Dorsolateral prefrontal cortex (tissue), 120 donors: ENCODE measurements at regions of chr9 and their contacts with region 1.

Region 1: DNA sequence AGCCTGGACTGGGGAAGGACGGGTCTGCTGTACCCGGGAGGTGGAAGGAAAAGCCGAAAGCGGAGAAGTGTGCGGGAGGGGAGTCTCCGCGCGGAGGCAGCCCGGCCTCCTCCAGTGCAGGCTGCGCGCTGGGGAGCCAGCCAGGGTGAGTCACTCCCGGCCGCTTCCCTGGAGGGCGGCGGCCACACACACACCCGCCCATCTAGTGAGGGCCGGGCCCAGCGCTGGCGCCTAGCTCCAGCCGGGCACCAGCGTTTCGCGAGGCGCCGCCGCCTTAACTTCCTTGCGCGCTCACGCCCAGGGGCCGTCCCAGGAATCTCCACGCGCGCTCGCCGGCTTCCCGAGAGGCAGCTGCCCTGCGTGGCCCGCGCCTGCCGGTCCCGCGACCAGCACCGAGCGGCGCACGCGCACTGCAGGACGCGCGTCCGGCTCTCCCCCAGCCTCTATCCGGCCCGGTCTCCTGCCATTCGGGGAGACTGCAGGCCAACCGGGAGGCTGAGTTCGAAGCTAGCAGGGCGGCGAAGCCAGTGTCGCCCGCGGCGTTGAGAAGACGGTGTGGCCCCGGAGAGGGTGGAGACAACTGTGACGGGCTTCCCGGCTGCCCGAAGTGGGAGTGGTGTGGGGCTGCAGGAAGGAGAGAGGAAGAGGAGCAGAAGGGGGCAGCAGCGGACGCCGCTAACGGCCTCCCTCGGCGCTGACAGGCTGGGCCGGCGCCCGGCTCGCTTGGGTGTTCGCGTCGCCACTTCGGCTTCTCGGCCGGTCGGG is at the start of gene JAK2:
- DNase-seq: peak; percentile 72 to 92 (median 86)
- H3K4me3 ChIP-seq: peak within 1 kb of the TSS; percentile 44 to 99 (median 90)
- H3K27ac ChIP-seq: peak within 1 kb of the TSS; percentile 84 to 99 (median 97)
- H3K27me3 ChIP-seq: no peaks in the 10 kb centered on the region
- CTCF ChIP-seq: peak in 53 of 56 donors; percentile 12 to 68 (median 46)
- total RNA-seq, gene JAK2: 15.3 to 35.5 (median 24.7) TPM

Region 2: GRCh38 chr9:4604678-4605095 is 380.1 kb before region 1 on chr9:
- intact Hi-C with region 1: loop called in 1 of 2 experiments (anchors 10 kb)
- DNase-seq: peak in 3 of 10 donors; percentile 38 to 74 (median 68)
- H3K4me3 ChIP-seq: no peak overlapping the region
- H3K27ac ChIP-seq: no peak overlapping the region
- H3K27me3 ChIP-seq: no peaks in the 10 kb centered on the region
- CTCF ChIP-seq: peak; percentile 50 to 84 (median 72)

Region 3: GRCh38 chr9:4679268-4680172 is 305.3 kb before region 1 on chr9 and contains the start of gene CDC37L1:
- intact Hi-C with region 1: loop called in 1 of 2 experiments (anchors 10 kb)
- DNase-seq: peak; percentile 94 to 99 (median 98)
- H3K4me3 ChIP-seq: peak within 1 kb of the TSS; percentile 63 to 99 (median 92)
- H3K27ac ChIP-seq: peak within 1 kb of the TSS; percentile 88 to 100 (median 97)
- H3K27me3 ChIP-seq: no peaks in the 10 kb centered on the region
- CTCF ChIP-seq: peak; percentile 8 to 81 (median 66)
- total RNA-seq, gene CDC37L1: 14.4 to 43.2 (median 28.4) TPM

Region 4: GRCh38 chr9:4762108-4762885 is 222.5 kb before region 1 on chr9:
- intact Hi-C with region 1: loop called (anchors 2 to 5 kb)
- DNase-seq: peak; percentile 50 to 85 (median 72)
- H3K4me3 ChIP-seq: peak overlapping the region in 36 of 59 donors; percentile 0 to 50 (median 22)
- H3K27ac ChIP-seq: peak overlapping the region in 5 of 59 donors; percentile 11 to 65 (median 35)
- H3K27me3 ChIP-seq: no peaks in the 10 kb centered on the region
- CTCF ChIP-seq: peak; percentile 70 to 99 (median 88)

Region 5: GRCh38 chr9:4855841-4856240 is 129.0 kb before region 1 on chr9:
- intact Hi-C with region 1: loop called in 1 of 2 experiments (anchors 10 kb)
- DNase-seq: peak in 8 of 10 donors; percentile 36 to 80 (median 66)
- H3K4me3 ChIP-seq: no peak overlapping the region
- H3K27ac ChIP-seq: peak overlapping the region in 45 of 59 donors; percentile 3 to 84 (median 65)
- H3K27me3 ChIP-seq: no peaks in the 10 kb centered on the region
- CTCF ChIP-seq: no peak

Region 6: DNA sequence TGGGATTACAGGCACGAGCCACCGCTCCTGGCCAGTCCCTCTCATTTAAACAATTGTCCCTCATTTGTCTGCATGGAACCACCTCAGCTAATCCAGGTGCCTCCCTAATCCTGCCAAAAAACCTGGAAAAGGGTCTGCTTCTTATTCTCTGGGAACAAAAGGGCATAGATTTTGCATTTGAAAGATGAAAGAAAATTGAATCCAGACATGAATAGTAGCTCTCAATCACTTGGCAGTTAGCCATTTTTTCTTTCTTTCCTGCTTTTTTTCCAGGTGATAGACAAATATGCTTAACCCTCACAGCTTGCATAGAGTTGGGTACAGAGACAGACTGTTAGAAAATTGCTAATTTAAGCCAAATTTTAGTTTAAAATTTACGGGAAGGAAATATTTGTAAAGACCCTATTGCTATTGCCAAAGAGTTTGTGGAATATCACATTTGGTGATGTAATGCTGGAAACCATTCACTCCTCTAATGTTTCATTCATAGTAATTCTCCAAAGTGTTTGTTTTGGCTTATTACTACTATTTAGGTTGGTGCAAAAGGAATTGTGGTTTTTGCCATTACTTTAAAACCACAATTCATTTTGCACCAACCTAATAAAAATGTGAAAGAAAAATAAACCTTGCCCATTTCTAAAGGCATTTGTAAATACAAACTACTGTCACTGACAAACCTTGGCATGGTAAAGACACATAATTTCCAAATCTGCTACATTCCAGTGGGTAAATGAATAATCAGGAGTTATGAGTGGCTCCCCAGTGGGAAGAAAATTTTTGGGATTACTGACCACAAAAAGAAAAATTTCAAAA is 80.3 kb before region 1 on chr9:
- intact Hi-C with region 1: no loop called
- DNase-seq: no peak
- H3K4me3 ChIP-seq: no peak overlapping the region
- H3K27ac ChIP-seq: no peak overlapping the region
- H3K27me3 ChIP-seq: no peaks in the 10 kb centered on the region
- CTCF ChIP-seq: no peak

Region 7: GRCh38 chr9:5437254-5438216 is 452.7 kb after region 1 on chr9 and contains the start of gene PLGRKT:
- intact Hi-C with region 1: loop called (anchors 10 kb)
- DNase-seq: peak; percentile 93 to 99 (median 97)
- H3K4me3 ChIP-seq: peak within 1 kb of the TSS; percentile 58 to 98 (median 83)
- H3K27ac ChIP-seq: peak within 1 kb of the TSS; percentile 73 to 99 (median 93)
- H3K27me3 ChIP-seq: no peaks in the 10 kb centered on the region
- CTCF ChIP-seq: peak in 51 of 56 donors; percentile 6 to 66 (median 46)
- total RNA-seq, gene PLGRKT: 4.1 to 17.5 (median 10.1) TPM